Panc1 (cell line): ENCODE measurements at regions of chr15 and their contacts with region 1.

Region 1: GRCh38 chr15:26889298-26889898 is 22.5 kb downstream of the GABRA5 start:
- DNase-seq: peak; percentile 63
- ATAC-seq: no peak
- H3K4me3 ChIP-seq: peak overlapping the region; percentile 18 to 37; a peak in 2 of 4 replicates
- H3K27ac ChIP-seq: no peak overlapping the region
- H3K4me1 ChIP-seq: peaks cover 4% of the 10 kb centered on the region
- H3K27me3 ChIP-seq: no peaks in the 10 kb centered on the region
- CTCF ChIP-seq: peak; percentile 70; the same call in 1 of the 2 replicates

Region 2: GRCh38 chr15:27017168-27017809 is 127.9 kb after region 1 on chr15:
- CTCF ChIA-PET with region 1: interaction called, 5 read pairs
- POLR2A ChIA-PET with region 1: no interaction called
- in situ Hi-C with region 1: no loop called
- intact Hi-C with region 1: loop called (anchors 1 kb)
- DNase-seq: peak; percentile 28
- ATAC-seq: peak; percentile 89
- H3K4me3 ChIP-seq: no peak overlapping the region
- H3K27ac ChIP-seq: no peak overlapping the region
- H3K4me1 ChIP-seq: no peaks in the 10 kb centered on the region
- H3K27me3 ChIP-seq: no peaks in the 10 kb centered on the region
- CTCF ChIP-seq: peak; percentile 87

Region 3: DNA sequence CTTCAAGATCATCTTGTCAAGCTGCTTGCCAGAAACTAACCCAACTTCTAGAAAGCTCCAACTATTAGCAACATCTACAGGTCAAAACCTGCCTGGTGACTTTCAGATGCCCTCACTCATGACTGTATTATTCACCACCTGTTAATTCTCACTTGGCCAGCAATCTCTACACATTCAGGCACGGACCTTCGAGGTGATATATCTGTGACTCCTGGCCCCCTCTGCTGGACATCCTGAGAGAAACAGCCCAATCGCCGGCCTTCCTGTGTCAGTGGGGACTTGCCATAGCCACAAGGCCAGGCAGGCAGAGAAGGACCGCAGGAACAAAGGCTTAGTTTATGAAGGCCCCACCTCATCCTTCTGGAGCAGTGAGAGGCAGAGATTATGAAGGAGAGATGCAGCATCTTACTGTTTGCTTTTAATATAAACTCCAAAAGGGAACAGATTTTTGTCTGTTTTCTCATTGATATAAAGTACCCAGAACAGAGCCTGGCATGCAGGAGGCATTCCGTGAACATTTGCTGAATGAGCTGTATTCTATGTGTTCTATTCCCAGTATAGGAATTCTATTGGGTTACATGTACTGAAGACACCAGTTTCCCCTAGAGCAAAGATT is 1234.1 kb after region 1 on chr15:
- CTCF ChIA-PET with region 1: no interaction called
- POLR2A ChIA-PET with region 1: no interaction called
- in situ Hi-C with region 1: no loop called
- intact Hi-C with region 1: loop called (anchors 5 kb)
- DNase-seq: peak; percentile 36
- ATAC-seq: peak; percentile 88
- H3K4me3 ChIP-seq: no peak overlapping the region
- H3K27ac ChIP-seq: no peak overlapping the region
- H3K4me1 ChIP-seq: no peaks in the 10 kb centered on the region
- H3K27me3 ChIP-seq: no peaks in the 10 kb centered on the region
- CTCF ChIP-seq: peak; percentile 87